ENCODE measurements at regions of chr2 and their contacts with region 1.

Region 1: DNA sequence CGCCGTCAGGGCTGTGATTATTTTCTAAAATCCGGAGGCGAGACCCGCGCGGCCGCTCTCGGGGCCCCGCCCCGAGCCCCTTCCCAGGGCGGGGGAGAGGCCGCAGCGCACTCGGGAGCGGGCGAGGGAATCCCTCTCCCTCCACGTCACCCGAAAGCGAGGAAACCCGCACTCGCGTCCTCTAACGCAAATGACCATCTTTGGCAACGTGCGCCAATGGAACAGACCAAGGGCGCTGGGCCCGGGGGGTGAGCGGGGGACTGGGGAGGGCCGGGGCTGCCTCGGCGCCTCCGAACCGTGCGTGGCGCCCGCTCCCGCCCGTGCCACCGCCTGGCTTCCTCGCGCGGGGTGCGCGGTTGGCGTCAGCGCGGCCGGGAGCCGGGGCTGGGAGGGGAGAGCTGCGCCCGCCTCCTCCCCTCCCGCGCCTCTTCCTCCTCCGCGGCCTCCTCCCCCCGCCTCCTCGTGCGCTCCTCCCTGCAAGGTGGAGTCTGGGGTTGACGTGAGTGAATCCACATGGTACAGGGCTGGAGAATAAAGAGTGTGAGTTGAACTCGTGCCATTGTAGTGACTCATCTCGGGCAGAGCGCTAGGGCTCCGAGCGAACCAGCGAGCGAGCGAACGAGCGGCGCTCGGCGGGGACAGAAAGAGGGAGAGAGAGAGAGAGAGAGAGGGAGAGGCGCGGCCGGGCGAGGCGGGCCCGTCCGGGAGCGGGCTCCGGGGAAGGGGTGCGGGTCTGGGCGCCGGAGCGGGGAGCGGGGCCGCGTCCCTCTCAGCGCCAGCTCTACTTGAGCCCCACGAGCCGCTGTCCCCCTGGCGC is at the start of gene FOSL2:
- DNase-seq: peak; percentile 99
- H3K4me3 Mint-ChIP-seq: no peak within 1 kb of the TSS
- H3K27ac Mint-ChIP-seq: no peak within 1 kb of the TSS
- H3K4me1 Mint-ChIP-seq: peaks cover 18% of the 10 kb centered on the region
- H3K27me3 Mint-ChIP-seq: no peaks in the 10 kb centered on the region
- CTCF ChIP-seq: no peak
- total RNA-seq, gene FOSL2: 122 and 141 TPM in 2 replicates

Region 2: GRCh38 chr2:27703638-27704341 is 688.7 kb before region 1 on chr2:
- CTCF ChIA-PET with region 1: interaction called, 4 read pairs
- POLR2A ChIA-PET with region 1: interaction called, 33 read pairs
- intact Hi-C with region 1: loop called (anchors 1 kb)
- DNase-seq: peak; percentile 87
- H3K4me3 Mint-ChIP-seq: no peak overlapping the region
- H3K27ac Mint-ChIP-seq: no peak overlapping the region
- H3K4me1 Mint-ChIP-seq: peaks cover 47% of the 10 kb centered on the region
- H3K27me3 Mint-ChIP-seq: no peaks in the 10 kb centered on the region
- CTCF ChIP-seq: peak; percentile 76

Region 3: DNA sequence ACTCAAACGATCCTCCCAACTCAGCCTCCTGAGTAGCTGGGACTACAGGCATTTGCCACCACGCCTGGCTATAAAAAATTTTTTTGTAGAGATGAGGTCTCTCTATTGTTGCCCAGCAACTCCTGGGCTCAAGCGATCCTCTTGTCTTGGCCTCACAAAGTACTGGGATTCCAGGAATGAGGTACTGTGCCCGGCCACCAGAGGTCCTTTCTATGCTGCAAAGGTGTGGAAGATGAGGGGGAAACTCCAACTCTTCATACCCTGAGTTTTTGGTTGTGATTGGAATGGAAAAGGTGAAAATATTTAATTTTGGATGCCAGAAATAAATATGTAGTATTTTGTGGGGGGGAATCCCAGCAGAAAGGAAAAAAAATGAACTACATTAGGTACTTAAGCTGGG is 585.0 kb before region 1 on chr2:
- CTCF ChIA-PET with region 1: no interaction called
- POLR2A ChIA-PET with region 1: interaction called, 12 read pairs
- intact Hi-C with region 1: loop called (anchors 2 kb)
- DNase-seq: peak; percentile 55
- H3K4me3 Mint-ChIP-seq: no peak overlapping the region
- H3K27ac Mint-ChIP-seq: no peak overlapping the region
- H3K4me1 Mint-ChIP-seq: peaks cover 39% of the 10 kb centered on the region
- H3K27me3 Mint-ChIP-seq: no peaks in the 10 kb centered on the region
- CTCF ChIP-seq: peak; percentile 47

Region 4: DNA sequence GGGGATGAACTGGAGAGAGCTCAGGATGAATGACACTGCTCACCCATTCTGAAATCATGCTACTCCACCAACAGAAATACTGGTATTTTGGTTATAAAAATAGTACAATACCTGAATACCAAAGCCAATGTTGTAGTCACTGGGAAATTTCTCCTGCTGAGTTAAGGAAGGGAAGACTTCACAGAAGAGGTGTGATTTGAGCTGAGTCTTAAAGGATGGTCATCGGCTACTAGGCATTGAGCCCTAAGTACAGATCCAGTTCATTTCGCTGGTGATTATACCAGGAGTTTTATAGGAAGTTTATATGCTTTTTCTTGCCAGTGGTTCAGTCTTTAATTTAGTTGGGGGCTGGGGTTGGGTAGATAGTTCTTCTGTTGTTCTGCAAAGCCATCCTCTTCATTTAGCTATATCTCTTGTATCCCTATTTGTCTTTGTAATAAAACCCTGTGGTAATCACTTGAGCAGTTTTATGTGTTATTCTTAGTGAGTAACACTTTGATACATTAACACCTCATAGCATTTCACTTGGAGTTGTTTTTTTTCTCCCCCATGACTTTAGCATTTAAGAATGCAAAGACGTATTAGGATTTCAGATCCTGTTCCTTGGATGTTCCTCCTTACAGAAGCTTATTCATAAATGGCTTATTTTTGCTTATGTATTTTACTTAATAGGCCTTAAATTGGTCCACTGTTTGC is 239.8 kb before region 1 on chr2:
- CTCF ChIA-PET with region 1: interaction called, 5 read pairs
- POLR2A ChIA-PET with region 1: interaction called, 10 read pairs
- intact Hi-C with region 1: no loop called
- DNase-seq: no peak
- H3K4me3 Mint-ChIP-seq: no peak overlapping the region
- H3K27ac Mint-ChIP-seq: peak overlapping the region; percentile 60
- H3K4me1 Mint-ChIP-seq: peaks cover 14% of the 10 kb centered on the region
- H3K27me3 Mint-ChIP-seq: no peaks in the 10 kb centered on the region
- CTCF ChIP-seq: no peak

Region 5: DNA sequence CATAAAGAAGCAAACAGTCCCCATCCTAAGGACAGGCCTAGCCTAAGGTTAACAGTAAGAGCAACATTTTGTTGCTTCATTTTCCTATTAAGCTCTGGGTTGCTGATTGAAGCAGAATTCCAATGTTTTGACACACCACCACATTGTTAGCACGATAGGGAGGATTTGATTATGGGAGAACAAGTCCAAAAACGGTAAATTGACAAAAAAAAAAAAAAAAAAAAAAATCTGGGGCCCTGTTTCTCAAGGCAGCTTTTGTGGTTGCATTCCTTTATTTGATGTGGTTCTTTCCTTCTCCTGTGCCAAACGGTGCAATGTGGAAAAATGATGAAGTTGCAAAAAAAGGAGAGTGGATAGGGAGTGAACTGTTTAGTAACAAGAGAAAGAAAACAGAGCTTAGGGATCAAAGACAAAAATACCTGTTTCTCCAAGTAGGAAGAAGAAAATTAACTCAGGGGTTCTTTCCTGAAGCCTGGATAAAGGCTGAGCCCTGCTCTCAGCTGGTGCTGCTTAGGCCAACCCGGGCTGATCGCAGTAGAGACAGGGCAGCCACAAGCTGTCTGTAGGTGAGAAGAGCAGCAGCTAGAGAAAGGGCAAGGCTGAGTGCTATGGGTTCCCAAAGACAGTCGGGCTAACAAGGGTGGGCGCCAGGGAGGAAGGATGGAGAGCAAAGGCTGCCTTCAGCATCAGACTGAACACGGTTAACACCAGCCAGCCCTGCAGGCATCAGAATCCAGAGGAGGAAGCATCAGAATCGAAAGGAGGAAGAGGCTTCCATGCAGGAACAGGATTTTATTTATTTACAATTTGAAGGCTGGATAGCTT is 167.6 kb before region 1 on chr2:
- CTCF ChIA-PET with region 1: no interaction called
- POLR2A ChIA-PET with region 1: interaction called, 117 read pairs
- intact Hi-C with region 1: no loop called
- DNase-seq: peak; percentile 66
- H3K4me3 Mint-ChIP-seq: peak overlapping the region; percentile 41
- H3K27ac Mint-ChIP-seq: peak overlapping the region; percentile 93
- H3K4me1 Mint-ChIP-seq: peaks cover 39% of the 10 kb centered on the region
- H3K27me3 Mint-ChIP-seq: no peaks in the 10 kb centered on the region
- CTCF ChIP-seq: no peak

Region 6: DNA sequence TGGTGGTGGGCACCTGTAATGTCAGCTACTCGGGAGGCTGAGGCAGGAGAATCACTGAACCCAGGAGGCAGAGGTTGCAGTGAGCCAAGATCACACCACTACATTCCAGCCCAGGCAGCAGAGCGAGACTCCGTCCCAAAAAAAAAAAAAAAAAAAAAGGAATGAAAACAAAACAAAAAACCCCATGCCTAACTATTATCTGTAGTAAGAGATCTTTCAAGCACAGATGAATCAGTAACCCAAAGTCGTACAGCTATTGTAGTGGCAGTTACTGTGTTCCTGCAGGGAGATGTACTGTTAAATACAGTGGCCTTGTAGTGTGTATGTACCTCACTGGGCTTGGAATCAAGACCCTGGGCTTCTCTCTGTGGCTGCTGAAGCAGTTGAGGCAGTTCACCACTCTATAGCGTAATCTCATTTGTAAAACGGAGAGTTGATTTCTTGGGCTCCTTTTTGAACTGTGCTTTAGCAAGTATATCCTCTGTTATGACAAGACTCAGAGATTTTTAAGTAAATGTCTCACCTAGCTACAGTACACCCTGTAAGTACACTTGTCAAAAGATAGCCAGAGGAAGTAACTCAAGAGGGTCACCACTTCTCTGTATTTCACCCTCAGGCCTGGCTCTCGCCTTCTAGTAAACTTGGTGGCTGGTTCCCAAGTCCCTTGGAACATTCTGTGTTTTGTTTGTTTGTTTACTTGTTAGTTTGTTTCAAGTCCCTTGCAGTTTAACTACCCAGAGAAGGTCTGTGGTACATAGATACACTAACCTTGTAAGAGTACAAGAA is 109.5 kb before region 1 on chr2:
- CTCF ChIA-PET with region 1: no interaction called
- POLR2A ChIA-PET with region 1: interaction called, 277 read pairs
- intact Hi-C with region 1: no loop called
- DNase-seq: no peak
- H3K4me3 Mint-ChIP-seq: no peak overlapping the region
- H3K27ac Mint-ChIP-seq: peak overlapping the region; percentile 61
- H3K4me1 Mint-ChIP-seq: peaks cover 13% of the 10 kb centered on the region
- H3K27me3 Mint-ChIP-seq: no peaks in the 10 kb centered on the region
- CTCF ChIP-seq: no peak

Region 7: GRCh38 chr2:28413142-28413898 is 20.8 kb after region 1 on chr2:
- CTCF ChIA-PET with region 1: no interaction called
- POLR2A ChIA-PET with region 1: interaction called, 53 read pairs
- intact Hi-C with region 1: no loop called
- DNase-seq: no peak
- H3K4me3 Mint-ChIP-seq: no peak overlapping the region
- H3K27ac Mint-ChIP-seq: peak overlapping the region; percentile 19
- H3K4me1 Mint-ChIP-seq: peaks cover 24% of the 10 kb centered on the region
- H3K27me3 Mint-ChIP-seq: no peaks in the 10 kb centered on the region
- CTCF ChIP-seq: no peak

Measured in MCF 10A (cell line).